HepG2 (cell line): ENCODE measurements at regions of chr7 and their contacts with region 1.

Region 1: DNA sequence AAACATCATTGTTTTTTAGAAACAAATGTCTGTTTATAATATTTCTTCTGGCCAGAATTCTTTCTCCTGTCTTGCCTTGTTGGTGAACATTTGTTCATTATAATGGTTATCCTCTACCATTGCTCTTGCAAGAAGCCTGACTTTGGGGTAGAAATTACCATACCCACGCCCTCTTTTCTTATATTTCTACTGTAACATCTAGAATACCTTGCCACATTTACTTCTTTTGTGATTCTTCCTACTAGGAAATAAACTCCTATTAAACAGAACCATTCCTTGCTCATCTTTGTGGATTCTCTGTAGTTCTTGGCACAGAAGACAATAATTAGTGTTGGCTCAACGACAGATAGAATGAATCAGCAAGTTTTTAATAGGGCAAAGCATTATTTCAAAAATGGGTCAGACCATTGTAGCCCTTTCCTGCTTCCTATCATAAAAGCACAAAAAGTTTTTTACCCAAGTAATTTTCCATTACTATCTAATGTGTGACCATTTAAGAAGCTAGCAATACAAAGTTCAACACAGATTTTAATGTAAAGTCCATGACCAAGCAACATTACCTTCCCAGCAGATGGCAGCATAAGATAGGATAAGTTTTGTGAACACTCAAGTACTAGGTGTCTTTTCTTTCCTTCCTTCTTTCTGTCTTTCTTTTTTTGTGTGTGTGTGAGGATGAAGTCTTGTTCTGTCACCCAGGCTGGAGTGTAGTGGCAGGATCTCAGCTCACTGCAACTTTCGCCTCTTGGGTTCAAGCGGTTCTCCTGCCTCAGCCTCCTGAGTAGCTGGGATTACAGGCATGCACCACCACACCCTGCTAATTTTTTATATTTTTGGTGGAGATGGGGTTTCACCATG is 270.4 kb downstream of the HGF start:
- DNase-seq: peak; percentile 63
- ATAC-seq: peak; percentile 87
- H3K4me3 ChIP-seq: no peak overlapping the region
- H3K27ac ChIP-seq: no peak overlapping the region
- H3K4me1 ChIP-seq: no peaks in the 10 kb centered on the region
- H3K27me3 ChIP-seq: no peaks in the 10 kb centered on the region
- CTCF ChIP-seq: peak; percentile 78
- EP300 ChIP-seq: no peak
- POLR2A ChIP-seq: no peak
- RAD21 ChIP-seq: peak; percentile 35; the same call in 1 of the 2 replicates

Region 2: DNA sequence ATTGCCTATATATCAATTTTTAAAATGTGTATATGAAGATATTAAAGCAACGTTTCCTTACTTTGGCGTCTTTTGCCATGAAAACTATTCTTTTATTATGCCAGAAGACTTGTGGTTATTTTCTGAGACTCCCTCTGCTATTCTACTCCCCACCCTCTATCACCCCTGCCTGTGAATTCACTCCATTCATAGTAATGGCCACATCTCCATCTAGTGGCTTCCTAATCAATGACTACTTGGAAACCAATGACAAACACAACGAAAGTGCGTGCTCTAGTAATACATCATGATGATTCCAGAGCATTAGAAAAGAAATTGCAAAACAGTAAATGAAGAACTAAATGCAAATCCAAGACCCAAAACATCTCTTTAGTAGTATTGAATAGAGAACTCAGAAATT is 457.0 kb after region 1 on chr7:
- CTCF ChIA-PET with region 1: interaction called, 10 read pairs
- POLR2A ChIA-PET with region 1: no interaction called
- in situ Hi-C with region 1: loop called (anchors 5 kb)
- intact Hi-C with region 1: loop called (anchors 1 kb)
- DNase-seq: peak; percentile 39
- ATAC-seq: peak; percentile 94
- H3K4me3 ChIP-seq: no peak overlapping the region
- H3K27ac ChIP-seq: no peak overlapping the region
- H3K4me1 ChIP-seq: no peaks in the 10 kb centered on the region
- H3K27me3 ChIP-seq: no peaks in the 10 kb centered on the region
- CTCF ChIP-seq: peak; percentile 74
- EP300 ChIP-seq: no peak
- POLR2A ChIP-seq: no peak
- RAD21 ChIP-seq: peak; percentile 57; the same call in 1 of the 2 replicates

Region 3: GRCh38 chr7:82481499-82482097 is 982.1 kb after region 1 on chr7:
- CTCF ChIA-PET with region 1: no interaction called
- POLR2A ChIA-PET with region 1: no interaction called
- in situ Hi-C with region 1: no loop called
- intact Hi-C with region 1: loop called (anchors 10 kb)
- DNase-seq: peak; percentile 2
- ATAC-seq: no peak
- H3K4me3 ChIP-seq: no peak overlapping the region
- H3K27ac ChIP-seq: no peak overlapping the region
- H3K4me1 ChIP-seq: no peaks in the 10 kb centered on the region
- H3K27me3 ChIP-seq: no peaks in the 10 kb centered on the region
- CTCF ChIP-seq: peak; percentile 52
- EP300 ChIP-seq: no peak
- POLR2A ChIP-seq: no peak
- RAD21 ChIP-seq: no peak

Region 4: GRCh38 chr7:82729172-82730030 is 1229.9 kb after region 1 on chr7:
- CTCF ChIA-PET with region 1: no interaction called
- POLR2A ChIA-PET with region 1: no interaction called
- in situ Hi-C with region 1: loop called (anchors 25 kb)
- intact Hi-C with region 1: loop called (anchors 5 kb)
- DNase-seq: peak; percentile 12
- ATAC-seq: peak; percentile 56; the same call in 2 of the 3 replicates
- H3K4me3 ChIP-seq: no peak overlapping the region
- H3K27ac ChIP-seq: no peak overlapping the region
- H3K4me1 ChIP-seq: no peaks in the 10 kb centered on the region
- H3K27me3 ChIP-seq: no peaks in the 10 kb centered on the region
- CTCF ChIP-seq: peak; percentile 54
- EP300 ChIP-seq: no peak
- POLR2A ChIP-seq: no peak
- RAD21 ChIP-seq: no peak